Activated T-helper 2 cell treated with anti-CD3 and anti-CD28 coated beads, Interferon-gamma antibody, Interleukin-2, Interleukin-4, amounts not matched to agents 10 μg/mL and 5 μg/mL and 100 μg/mL, durations not matched to agents 14 hours and 24 hours and 36 hours (primary cell): ENCODE measurements at regions of chr10 and their contacts with region 1.

Region 1: DNA sequence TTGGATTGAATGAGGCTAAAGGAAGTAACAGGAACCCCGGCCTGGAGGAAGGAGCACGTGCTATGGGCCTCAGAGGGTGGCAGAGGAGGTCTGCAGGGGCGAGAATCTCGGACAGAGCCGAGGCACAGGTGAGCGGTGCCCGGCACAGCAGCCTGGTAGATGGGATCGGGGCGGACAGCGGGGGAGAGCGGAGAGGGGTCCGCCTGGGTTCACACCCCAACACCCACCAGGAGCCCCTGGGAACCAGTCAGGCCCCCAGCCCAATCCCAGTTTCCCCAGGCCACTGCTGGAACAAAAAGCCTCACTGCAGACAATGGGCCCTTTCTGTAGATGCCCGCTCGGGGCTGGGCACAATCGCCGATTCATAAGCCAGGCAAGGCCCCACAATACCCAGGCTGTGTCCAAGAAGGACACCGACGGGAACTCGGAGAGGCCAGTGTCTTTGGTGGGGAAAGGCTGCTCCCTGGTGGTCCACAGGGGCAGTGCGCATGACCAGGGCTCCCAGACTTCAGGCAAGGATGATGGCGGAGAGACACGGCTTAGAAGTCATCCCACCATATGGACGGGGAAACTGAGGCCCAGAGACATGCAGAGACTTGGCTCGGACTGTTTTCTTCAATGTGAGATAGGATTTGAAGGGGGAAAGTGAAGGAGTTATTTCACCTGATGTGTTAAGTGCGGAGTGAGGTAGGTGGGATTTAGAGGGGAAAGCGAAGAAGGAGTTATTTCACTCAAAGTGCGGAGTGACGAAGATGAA is 106.9 kb upstream of the GPR26 start:
- DNase-seq: peak; percentile 35
- H3K4me3 Mint-ChIP-seq: no peak overlapping the region
- H3K27ac Mint-ChIP-seq: no peak overlapping the region
- H3K4me1 Mint-ChIP-seq: no peaks in the 10 kb centered on the region
- H3K27me3 Mint-ChIP-seq: peaks cover 1% of the 10 kb centered on the region

Region 2: DNA sequence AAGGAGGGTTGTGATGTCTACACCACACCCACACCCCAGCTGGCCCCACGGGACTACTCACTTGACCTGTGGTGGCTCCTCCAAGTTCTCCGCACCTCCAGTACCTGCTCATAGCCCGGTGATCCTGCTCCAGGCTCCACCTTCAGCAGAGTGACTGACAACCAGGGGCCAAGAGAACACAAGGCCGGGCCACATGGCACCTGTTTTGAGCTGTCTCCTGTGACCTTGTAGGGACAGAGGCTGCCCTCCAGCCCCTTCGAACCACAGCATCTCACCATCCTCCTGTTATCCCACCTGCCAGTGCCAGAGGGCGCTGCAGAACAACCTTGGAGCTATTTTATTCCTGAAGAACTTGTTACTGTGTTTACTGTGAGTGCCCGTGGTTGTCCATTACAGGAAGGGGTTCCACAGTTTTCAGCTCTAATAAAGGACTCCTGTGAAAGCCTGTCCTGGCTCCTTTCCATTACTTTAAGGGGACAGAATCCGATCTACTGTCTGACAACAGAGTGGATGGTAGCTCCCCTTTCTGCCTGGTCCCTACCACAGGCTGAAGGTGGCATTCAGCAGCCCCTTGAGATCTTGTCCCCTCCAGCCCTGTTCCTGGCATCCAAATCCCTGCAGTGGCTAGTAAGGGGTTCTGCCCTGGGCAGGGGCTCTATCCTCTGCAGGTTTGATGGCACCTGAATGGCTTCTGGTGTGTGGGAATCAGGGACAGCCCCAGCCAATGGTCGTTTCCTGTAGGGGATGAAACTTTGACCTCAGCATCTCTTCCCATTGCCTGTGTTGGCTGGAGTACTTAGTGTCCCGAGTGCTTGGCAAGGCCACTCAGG is 910.4 kb before region 1 on chr10:
- intact Hi-C with region 1: loop called (anchors 5 kb)
- DNase-seq: no peak
- H3K4me3 Mint-ChIP-seq: no peak overlapping the region
- H3K27ac Mint-ChIP-seq: no peak overlapping the region
- H3K4me1 Mint-ChIP-seq: no peaks in the 10 kb centered on the region
- H3K27me3 Mint-ChIP-seq: peaks cover 8% of the 10 kb centered on the region

Region 3: GRCh38 chr10:123043409-123043925 is 515.8 kb before region 1 on chr10:
- intact Hi-C with region 1: loop called (anchors 5 kb)
- DNase-seq: peak; percentile 32
- H3K4me3 Mint-ChIP-seq: no peak overlapping the region
- H3K27ac Mint-ChIP-seq: no peak overlapping the region
- H3K4me1 Mint-ChIP-seq: peaks cover 11% of the 10 kb centered on the region
- H3K27me3 Mint-ChIP-seq: no peaks in the 10 kb centered on the region

Region 4: GRCh38 chr10:123583639-123584418 is 24.6 kb after region 1 on chr10:
- intact Hi-C with region 1: no loop called
- DNase-seq: no peak
- H3K4me3 Mint-ChIP-seq: no peak overlapping the region
- H3K27ac Mint-ChIP-seq: no peak overlapping the region
- H3K4me1 Mint-ChIP-seq: no peaks in the 10 kb centered on the region
- H3K27me3 Mint-ChIP-seq: peaks cover 11% of the 10 kb centered on the region